Calu3 (cell line): ENCODE measurements at regions of chr12 and their contacts with region 1.

Region 1: GRCh38 chr12:29519585-29520182 is 22.2 kb upstream of the OVCH1 start:
- DNase-seq: peak; percentile 42
- H3K4me3 Mint-ChIP-seq: no peak overlapping the region
- H3K27ac Mint-ChIP-seq: no peak overlapping the region
- H3K4me1 Mint-ChIP-seq: no peaks in the 10 kb centered on the region
- H3K27me3 Mint-ChIP-seq: no peaks in the 10 kb centered on the region
- CTCF ChIP-seq: peak; percentile 28

Region 2: DNA sequence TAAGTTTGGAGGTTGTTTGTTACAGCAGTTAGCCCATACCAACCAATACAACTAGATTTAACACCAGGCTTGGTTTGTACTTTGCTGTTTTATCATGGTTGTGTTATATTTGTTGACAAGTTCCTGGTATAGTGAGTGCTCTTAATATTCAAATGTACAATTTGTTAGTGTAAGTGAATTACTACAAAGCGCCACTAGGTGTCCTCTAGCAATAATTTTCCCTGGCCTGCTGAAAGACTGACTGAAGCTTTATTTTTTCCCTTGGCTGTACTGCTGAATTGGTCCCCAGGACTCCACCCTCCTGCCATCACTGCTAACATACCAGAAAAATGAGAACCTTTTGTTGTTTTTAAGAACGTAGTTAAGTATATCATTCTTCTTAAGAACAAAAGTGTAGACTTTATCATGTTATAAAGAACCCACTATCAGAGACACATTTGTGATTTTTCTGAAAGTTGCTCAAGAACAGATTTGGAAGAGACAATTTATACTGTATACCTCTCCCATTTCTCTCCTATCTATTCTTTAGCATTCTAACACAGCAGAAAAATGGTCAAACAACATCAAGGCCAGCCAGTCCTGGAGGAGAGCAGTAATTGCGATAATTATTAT is 445.9 kb before region 1 on chr12:
- CTCF ChIA-PET with region 1: interaction called, 6 read pairs
- intact Hi-C with region 1: loop called (anchors 2 kb)
- DNase-seq: peak; percentile 21
- H3K4me3 Mint-ChIP-seq: no peak overlapping the region
- H3K27ac Mint-ChIP-seq: no peak overlapping the region
- H3K4me1 Mint-ChIP-seq: no peaks in the 10 kb centered on the region
- H3K27me3 Mint-ChIP-seq: peaks cover 19% of the 10 kb centered on the region
- CTCF ChIP-seq: peak; percentile 65

Region 3: GRCh38 chr12:29309320-29309902 is 210.3 kb before region 1 on chr12:
- CTCF ChIA-PET with region 1: interaction called, 4 read pairs
- intact Hi-C with region 1: loop called (anchors 1 kb)
- DNase-seq: no peak
- H3K4me3 Mint-ChIP-seq: no peak overlapping the region
- H3K27ac Mint-ChIP-seq: no peak overlapping the region
- H3K4me1 Mint-ChIP-seq: no peaks in the 10 kb centered on the region
- H3K27me3 Mint-ChIP-seq: no peaks in the 10 kb centered on the region
- CTCF ChIP-seq: no peak

Region 4: DNA sequence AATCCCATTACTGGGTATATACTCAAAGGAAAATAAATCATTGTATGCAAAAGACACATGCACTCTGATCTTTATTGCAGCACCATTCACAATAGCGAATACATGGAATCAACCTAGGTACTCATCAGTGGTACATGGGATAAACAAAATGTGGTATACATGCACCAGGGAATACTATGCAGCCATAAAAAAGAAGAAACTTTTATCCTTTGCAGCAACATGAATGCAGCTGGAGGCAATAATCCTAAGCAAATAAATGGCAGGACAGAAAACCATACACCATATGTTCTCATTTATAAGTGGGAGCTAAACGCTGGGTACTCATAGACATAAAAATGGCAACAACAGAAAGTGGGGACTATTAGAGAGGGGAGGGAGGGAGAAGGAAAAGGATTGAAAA is 154.6 kb before region 1 on chr12:
- CTCF ChIA-PET with region 1: no interaction called
- intact Hi-C with region 1: no loop called
- DNase-seq: no peak
- H3K4me3 Mint-ChIP-seq: no peak overlapping the region
- H3K27ac Mint-ChIP-seq: no peak overlapping the region
- H3K4me1 Mint-ChIP-seq: no peaks in the 10 kb centered on the region
- H3K27me3 Mint-ChIP-seq: no peaks in the 10 kb centered on the region
- CTCF ChIP-seq: no peak

Region 5: GRCh38 chr12:29380536-29381523 is 138.9 kb before region 1 on chr12 and contains the start of gene ERGIC2:
- CTCF ChIA-PET with region 1: interaction called, 6 read pairs
- intact Hi-C with region 1: loop called (anchors 2 kb)
- DNase-seq: peak; percentile 90
- H3K4me3 Mint-ChIP-seq: peak within 1 kb of the TSS; percentile 84
- H3K27ac Mint-ChIP-seq: peak within 1 kb of the TSS; percentile 93
- H3K4me1 Mint-ChIP-seq: peaks cover 10% of the 10 kb centered on the region
- H3K27me3 Mint-ChIP-seq: no peaks in the 10 kb centered on the region
- CTCF ChIP-seq: no peak
- total RNA-seq, gene ERGIC2: 112 and 120 TPM in 2 replicates

Region 6: GRCh38 chr12:29762637-29763300 is 243.1 kb after region 1 on chr12:
- CTCF ChIA-PET with region 1: no interaction called
- intact Hi-C with region 1: no loop called
- DNase-seq: no peak
- H3K4me3 Mint-ChIP-seq: no peak overlapping the region
- H3K27ac Mint-ChIP-seq: no peak overlapping the region
- H3K4me1 Mint-ChIP-seq: no peaks in the 10 kb centered on the region
- H3K27me3 Mint-ChIP-seq: no peaks in the 10 kb centered on the region
- CTCF ChIP-seq: no peak

Region 7: DNA sequence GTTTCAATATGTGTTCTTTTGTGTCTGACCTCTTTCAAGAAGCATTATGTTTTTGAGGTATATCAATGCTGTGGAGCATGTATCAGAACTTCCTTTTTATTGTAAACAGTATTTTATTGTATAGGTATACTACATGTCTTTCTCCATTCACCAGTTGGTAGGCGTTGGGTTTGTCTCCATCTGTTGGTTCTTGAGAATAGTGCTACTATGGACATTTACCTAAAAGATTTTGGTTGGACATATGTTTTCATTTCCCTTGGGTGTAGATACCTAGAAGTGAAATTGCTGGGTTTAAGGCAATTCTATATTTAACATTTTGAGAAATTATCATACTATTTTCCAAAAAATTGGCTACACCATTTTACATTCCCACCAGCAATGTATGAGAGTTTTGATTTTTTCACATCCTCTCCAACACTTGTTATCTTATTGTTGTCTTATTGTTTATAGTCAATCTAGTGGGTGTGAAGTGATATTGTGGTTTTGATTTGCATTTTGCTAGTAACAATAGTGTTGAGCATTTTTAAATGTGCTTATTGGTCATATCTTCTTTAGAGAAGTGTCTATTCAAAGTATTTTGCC is 766.8 kb after region 1 on chr12:
- CTCF ChIA-PET with region 1: no interaction called
- intact Hi-C with region 1: loop called (anchors 1 kb)
- DNase-seq: peak; percentile 7
- H3K4me3 Mint-ChIP-seq: no peak overlapping the region
- H3K27ac Mint-ChIP-seq: no peak overlapping the region
- H3K4me1 Mint-ChIP-seq: no peaks in the 10 kb centered on the region
- H3K27me3 Mint-ChIP-seq: peaks cover 63% of the 10 kb centered on the region
- CTCF ChIP-seq: peak; percentile 28

Region 8: DNA sequence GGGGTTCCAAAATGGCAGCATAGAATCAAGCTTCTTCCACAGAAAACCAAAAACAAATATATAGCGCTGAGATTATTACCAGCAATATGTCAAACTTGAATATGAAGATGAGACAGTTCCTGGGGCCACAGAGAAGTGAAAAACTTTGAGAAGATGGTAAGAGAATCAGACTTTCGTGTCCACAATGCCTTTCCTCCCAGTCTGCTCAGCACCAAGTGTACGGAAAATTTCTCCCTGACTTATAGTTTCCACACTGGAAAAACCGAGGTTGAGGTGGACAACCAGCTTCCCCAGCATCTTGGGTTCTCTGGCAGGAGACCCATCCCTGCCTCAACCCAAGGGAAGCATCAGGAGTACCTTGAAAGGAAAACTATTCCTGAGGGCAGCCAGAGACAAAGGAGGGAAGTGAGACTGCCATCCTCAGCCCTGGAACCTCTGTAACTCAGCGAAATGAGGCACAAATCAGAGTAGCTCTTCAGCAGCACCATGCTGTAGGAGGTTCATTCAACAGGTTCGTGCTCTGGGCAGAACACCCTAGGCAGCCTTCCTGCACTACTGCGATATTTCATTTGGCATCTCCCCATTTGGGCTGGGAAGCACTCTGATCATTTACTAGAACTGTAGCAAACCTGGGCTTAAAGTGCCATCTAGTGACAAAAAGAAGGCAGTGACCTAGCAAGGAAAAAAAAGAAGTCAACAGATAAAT is 1287.5 kb after region 1 on chr12:
- CTCF ChIA-PET with region 1: no interaction called
- intact Hi-C with region 1: loop called (anchors 5 kb)
- DNase-seq: peak; percentile 42
- H3K4me3 Mint-ChIP-seq: no peak overlapping the region
- H3K27ac Mint-ChIP-seq: peak overlapping the region; percentile 43
- H3K4me1 Mint-ChIP-seq: peaks cover 11% of the 10 kb centered on the region
- H3K27me3 Mint-ChIP-seq: no peaks in the 10 kb centered on the region
- CTCF ChIP-seq: peak; percentile 43

Region 9: DNA sequence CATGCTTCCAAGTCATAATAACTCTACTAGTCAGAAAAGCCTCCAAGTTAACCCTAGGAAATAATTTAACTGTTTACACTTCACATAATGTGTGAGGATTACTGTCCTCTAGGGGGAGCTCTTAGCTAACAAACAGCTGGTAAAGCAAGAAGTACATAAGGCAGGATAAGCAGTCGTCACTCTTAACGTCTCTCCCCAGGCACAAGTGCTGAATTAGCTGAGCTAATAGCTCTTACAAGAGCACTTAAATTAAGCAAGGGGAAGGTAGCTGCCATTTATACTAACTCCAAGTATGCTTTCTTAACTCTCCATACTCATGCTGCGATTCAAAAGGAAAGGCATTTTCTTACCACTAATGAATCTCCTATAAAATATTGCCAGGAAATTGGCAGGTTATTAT is 1327.6 kb after region 1 on chr12:
- CTCF ChIA-PET with region 1: no interaction called
- intact Hi-C with region 1: loop called (anchors 2 kb)
- DNase-seq: peak; percentile 48
- H3K4me3 Mint-ChIP-seq: no peak overlapping the region
- H3K27ac Mint-ChIP-seq: no peak overlapping the region
- H3K4me1 Mint-ChIP-seq: peaks cover 10% of the 10 kb centered on the region
- H3K27me3 Mint-ChIP-seq: peaks cover 16% of the 10 kb centered on the region
- CTCF ChIP-seq: peak; percentile 66